Endothelial cell of umbilical vein (primary cell): ENCODE measurements at regions of chr11 and their contacts with region 1.

Region 1: GRCh38 chr11:95469258-95469657 is 238.3 kb upstream of the SESN3 start:
- DNase-seq: no peak
- H3K4me3 ChIP-seq: no peak overlapping the region
- H3K27ac ChIP-seq: no peak overlapping the region
- H3K4me1 ChIP-seq: no peaks in the 10 kb centered on the region
- H3K27me3 ChIP-seq: no peaks in the 10 kb centered on the region
- CTCF ChIP-seq: no peak
- POLR2A ChIP-seq: no peak

Region 2: DNA sequence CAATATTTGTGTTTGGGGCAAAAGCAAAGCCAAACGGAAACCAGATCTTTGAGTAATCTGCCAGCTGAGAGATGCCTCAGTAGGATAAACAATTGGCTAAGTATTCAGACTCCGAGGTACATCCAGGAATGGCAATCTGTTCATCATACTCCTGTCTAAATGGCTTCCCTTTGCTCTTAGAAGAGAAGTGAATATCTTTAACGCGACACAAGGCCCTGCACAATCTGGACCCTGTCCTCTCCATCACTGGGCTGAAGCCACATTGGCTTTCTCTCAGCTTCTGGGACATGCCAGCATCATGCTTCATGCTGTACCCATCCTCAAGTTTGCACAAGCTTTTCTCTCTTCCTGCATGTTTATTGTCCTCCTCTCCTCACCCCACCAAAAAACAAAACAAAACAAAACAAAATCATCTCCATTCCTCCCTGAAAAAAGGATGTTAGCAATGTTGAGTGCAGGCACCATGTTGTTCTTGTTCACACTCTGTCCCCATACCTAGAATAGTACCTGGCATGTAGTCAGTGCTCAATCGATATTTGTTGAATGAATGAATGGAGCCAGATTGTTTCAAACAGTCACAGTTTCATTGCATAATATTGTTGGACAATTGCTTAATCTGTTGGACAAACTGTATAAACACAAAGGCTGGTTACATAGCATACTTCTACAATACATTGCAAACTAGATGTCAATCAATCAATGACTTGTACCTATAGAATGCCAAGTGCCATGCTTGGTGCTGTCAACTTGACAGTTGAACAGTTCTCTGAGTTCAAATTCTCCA is 200.0 kb before region 1 on chr11:
- CTCF ChIA-PET with region 1: no interaction called
- POLR2A ChIA-PET with region 1: no interaction called
- dilution Hi-C with region 1: no loop called
- intact Hi-C with region 1: no loop called
- DNase-seq: no peak
- H3K4me3 ChIP-seq: no peak overlapping the region
- H3K27ac ChIP-seq: no peak overlapping the region
- H3K4me1 ChIP-seq: no peaks in the 10 kb centered on the region
- H3K27me3 ChIP-seq: no peaks in the 10 kb centered on the region
- CTCF ChIP-seq: no peak
- POLR2A ChIP-seq: no peak

Region 3: GRCh38 chr11:95443386-95443785 is 25.9 kb before region 1 on chr11:
- CTCF ChIA-PET with region 1: no interaction called
- POLR2A ChIA-PET with region 1: no interaction called
- dilution Hi-C with region 1: no loop called
- intact Hi-C with region 1: loop called (anchors 1 kb)
- DNase-seq: no peak
- H3K4me3 ChIP-seq: no peak overlapping the region
- H3K27ac ChIP-seq: no peak overlapping the region
- H3K4me1 ChIP-seq: no peaks in the 10 kb centered on the region
- H3K27me3 ChIP-seq: no peaks in the 10 kb centered on the region
- CTCF ChIP-seq: no peak
- POLR2A ChIP-seq: no peak